Dorsolateral prefrontal cortex (tissue), 120 donors: ENCODE measurements at regions of chr20 and their contacts with region 1.

Region 1: GRCh38 chr20:32445539-32446273 is 87.6 kb downstream of the ASXL1 start:
- DNase-seq: peak in 4 of 10 donors; percentile 28 to 60 (median 45)
- H3K4me3 ChIP-seq: peak overlapping the region in 1 of 59 donors; percentile 17
- H3K27ac ChIP-seq: peak overlapping the region in 57 of 59 donors; percentile 4 to 98 (median 80)
- H3K27me3 ChIP-seq: no peaks in the 10 kb centered on the region
- CTCF ChIP-seq: no peak

Region 2: GRCh38 chr20:32391003-32391402 is 54.7 kb before region 1 on chr20:
- intact Hi-C with region 1: no loop called
- DNase-seq: no peak
- H3K4me3 ChIP-seq: no peak overlapping the region
- H3K27ac ChIP-seq: no peak overlapping the region
- H3K27me3 ChIP-seq: no peaks in the 10 kb centered on the region
- CTCF ChIP-seq: no peak

Region 3: GRCh38 chr20:32411955-32412706 is 33.6 kb before region 1 on chr20:
- intact Hi-C with region 1: no loop called
- DNase-seq: no peak
- H3K4me3 ChIP-seq: no peak overlapping the region
- H3K27ac ChIP-seq: no peak overlapping the region
- H3K27me3 ChIP-seq: no peaks in the 10 kb centered on the region
- CTCF ChIP-seq: no peak

Region 4: GRCh38 chr20:32484958-32485769 is 39.5 kb after region 1 on chr20:
- intact Hi-C with region 1: no loop called
- DNase-seq: peak; percentile 82 to 95 (median 88)
- H3K4me3 ChIP-seq: peak overlapping the region in 58 of 59 donors; percentile 42 to 92 (median 78)
- H3K27ac ChIP-seq: peak overlapping the region; percentile 58 to 99 (median 96)
- H3K27me3 ChIP-seq: no peaks in the 10 kb centered on the region
- CTCF ChIP-seq: peak; percentile 72 to 95 (median 88)

Region 5: GRCh38 chr20:32516583-32517517 is 71.1 kb after region 1 on chr20:
- intact Hi-C with region 1: loop called in 1 of 2 experiments (anchors 5 kb)
- DNase-seq: peak in 4 of 10 donors; percentile 42 to 75 (median 60)
- H3K4me3 ChIP-seq: peak overlapping the region in 1 of 59 donors; percentile 18
- H3K27ac ChIP-seq: peak overlapping the region in 57 of 59 donors; percentile 0 to 86 (median 65)
- H3K27me3 ChIP-seq: no peaks in the 10 kb centered on the region
- CTCF ChIP-seq: peak in 4 of 56 donors; percentile 11 to 23 (median 17)